HEK293 (cell line): ENCODE measurements at regions of chr5 and their contacts with region 1.

Region 1: DNA sequence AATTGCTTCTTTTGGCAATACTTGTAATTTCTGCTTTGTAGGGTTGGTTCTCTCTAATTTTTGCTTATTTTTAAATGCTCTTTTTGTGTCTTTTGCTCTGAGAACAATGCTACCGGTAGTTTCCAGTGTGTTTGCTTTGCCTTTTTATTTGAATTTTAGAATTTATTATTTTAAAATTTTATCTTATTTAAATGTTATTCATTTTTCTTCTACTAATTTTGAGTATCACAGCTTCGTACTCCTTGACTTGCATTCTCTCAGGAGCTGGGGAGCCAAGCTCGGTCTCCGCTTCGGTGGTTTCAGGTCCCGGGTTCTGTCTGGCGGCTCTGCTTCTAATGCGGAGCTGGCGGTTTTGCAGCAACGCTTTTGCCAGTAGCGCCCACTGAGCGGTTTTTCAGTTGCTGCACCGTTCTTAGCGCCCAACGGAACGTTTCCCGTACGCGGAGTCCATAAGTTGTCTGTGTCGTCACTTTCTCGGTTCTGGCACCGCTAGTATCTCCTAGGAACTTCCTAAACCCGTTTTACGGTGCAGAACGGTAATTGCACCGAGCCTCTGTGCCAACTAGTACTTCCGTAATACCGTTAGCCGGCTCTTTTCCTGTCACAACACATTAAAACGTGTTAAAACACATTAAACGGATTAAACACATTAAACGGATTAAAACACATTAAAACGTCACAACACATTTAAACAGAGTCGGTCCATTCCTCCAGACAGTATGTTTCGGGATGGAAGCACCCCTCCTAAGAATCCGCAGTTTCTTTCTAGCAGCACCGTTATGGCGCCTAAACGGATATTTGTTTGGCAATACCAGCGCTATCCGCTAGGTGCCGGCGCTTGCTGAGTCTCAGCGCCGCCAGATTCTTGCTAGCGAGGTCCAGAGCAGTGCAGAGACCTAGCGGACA is 45.6 kb downstream of the ANXA2R start:
- H3K4me3 ChIP-seq: peak overlapping the region; percentile 83
- H3K27ac ChIP-seq: 0 out of 2 replicates have a peak overlapping the region, but pooled peaks have one; percentile 2
- H3K4me1 ChIP-seq: no peaks in the 10 kb centered on the region
- CTCF ChIP-seq: peak; percentile 91

Region 2: GRCh38 chr5:43008369-43009153 is 14.1 kb after region 1 on chr5:
- CTCF ChIA-PET with region 1: interaction called, 14 read pairs
- POLR2A ChIA-PET with region 1: interaction called, 11 read pairs
- H3K4me3 ChIP-seq: peak overlapping the region; percentile 50
- H3K27ac ChIP-seq: peak overlapping the region; percentile 75
- H3K4me1 ChIP-seq: peaks cover 3% of the 10 kb centered on the region; the same call in 1 of the 2 replicates
- CTCF ChIP-seq: peak; percentile 83

Region 3: DNA sequence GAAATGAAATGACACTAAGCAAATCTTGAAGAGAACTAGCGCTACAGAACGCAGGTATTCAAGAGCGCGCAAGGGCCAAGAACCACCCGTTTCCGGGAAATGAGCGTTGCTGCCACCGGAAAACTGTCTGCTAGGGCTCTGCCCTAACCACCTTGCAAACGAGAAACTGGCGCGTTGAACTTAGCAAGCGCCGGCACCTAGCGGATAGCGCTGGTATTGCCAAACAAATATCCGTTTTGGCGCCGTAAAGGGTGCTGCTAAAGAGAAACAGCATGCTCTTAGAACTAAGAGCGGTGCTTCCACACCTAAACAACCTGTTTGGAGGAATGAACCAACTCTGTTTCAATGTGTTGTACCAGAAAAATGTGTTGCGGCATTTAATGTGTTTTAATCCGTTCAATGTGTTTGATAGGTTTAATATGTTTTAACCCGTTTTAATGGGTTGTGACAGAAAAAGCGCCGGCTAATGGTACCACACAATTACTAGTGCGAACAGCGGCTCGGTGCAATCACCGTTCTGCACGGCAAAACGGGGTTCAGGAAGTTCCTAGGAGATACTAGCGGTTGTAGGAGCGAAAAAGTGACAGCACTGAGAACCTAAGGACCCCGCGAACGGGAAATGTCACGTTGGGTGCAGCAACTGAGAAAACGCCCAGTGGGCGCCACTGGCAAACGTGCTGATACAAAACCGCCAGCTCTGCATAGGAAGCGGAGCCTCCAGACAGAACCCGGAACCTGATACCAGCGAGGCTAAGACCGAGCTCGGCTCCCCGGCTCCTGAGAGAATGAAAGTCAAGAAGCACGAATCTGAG is 46.0 kb after region 1 on chr5 and contains the start of gene ANXA2R:
- CTCF ChIA-PET with region 1: interaction called, 13 read pairs
- POLR2A ChIA-PET with region 1: interaction called, 11 read pairs
- H3K4me3 ChIP-seq: peak within 1 kb of the TSS; percentile 56
- H3K27ac ChIP-seq: peak within 1 kb of the TSS; percentile 84
- H3K4me1 ChIP-seq: no peaks in the 10 kb centered on the region
- CTCF ChIP-seq: peak; percentile 79